PC-9 (cell line): ENCODE measurements at regions of chr6 and their contacts with region 1.

Region 1: DNA sequence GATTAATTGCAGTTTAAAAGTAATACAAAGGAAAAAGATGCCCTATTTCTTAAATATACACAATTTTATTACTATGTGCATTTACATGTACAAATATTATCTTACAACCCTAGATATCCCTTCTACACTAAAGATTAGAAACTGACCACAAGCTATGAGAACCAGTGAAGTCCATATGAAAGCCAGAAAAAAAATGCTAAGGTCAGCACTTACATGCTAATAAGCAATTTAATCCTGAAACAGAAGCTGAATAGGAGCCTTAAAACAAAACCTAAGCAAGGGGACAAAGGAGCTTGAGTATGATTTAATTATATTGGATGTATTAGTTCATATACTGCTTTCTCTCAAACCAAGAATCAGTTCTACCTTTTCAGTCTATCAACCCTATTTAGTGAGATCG is 14.2 kb downstream of the CEP162 start:
- DNase-seq: no peak
- H3K4me3 ChIP-seq: no peak overlapping the region
- H3K27ac ChIP-seq: no peak overlapping the region
- H3K4me1 ChIP-seq: no peaks in the 10 kb centered on the region
- H3K27me3 ChIP-seq: no peaks in the 10 kb centered on the region
- CTCF ChIP-seq: no peak

Region 2: GRCh38 chr6:84197708-84198107 is 15.5 kb before region 1 on chr6:
- CTCF ChIA-PET with region 1: interaction called, 18 read pairs
- POLR2A ChIA-PET with region 1: no interaction called
- intact Hi-C with region 1: no loop called
- DNase-seq: no peak
- H3K4me3 ChIP-seq: no peak overlapping the region
- H3K27ac ChIP-seq: no peak overlapping the region
- H3K4me1 ChIP-seq: peaks cover 17% of the 10 kb centered on the region
- H3K27me3 ChIP-seq: no peaks in the 10 kb centered on the region
- CTCF ChIP-seq: no peak

Region 3: DNA sequence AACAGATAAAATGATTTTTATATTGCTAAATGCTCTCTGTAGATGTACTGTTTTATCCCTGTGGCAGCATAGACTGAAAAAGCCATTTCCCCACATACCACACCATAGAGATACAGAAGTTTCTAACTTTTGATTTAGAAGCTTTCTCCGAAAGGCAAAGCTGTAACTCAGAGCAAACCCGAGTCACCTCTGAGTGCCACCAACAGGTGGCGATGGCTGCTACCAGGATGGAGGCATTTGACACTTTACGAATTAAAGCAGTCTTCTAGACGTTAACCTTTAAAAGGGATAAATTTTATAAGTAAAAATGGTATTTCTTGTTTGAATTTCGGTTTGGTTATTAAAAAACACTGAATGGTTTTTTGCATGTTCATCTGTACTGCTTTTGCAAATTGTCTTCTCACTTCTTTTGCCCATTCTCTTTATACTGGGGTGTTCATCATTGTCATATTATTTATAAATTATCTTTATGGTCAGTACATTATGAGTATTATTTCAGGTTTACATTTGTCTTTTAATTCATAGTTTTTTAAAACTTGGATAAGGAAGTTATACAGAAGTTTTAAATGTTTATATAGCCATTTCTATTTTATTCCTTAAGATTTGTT is 215.2 kb after region 1 on chr6:
- CTCF ChIA-PET with region 1: no interaction called
- POLR2A ChIA-PET with region 1: no interaction called
- intact Hi-C with region 1: no loop called
- DNase-seq: peak in 1 of 2 experiments; percentile 33
- H3K4me3 ChIP-seq: no peak overlapping the region
- H3K27ac ChIP-seq: no peak overlapping the region
- H3K4me1 ChIP-seq: no peaks in the 10 kb centered on the region
- H3K27me3 ChIP-seq: no peaks in the 10 kb centered on the region
- CTCF ChIP-seq: peak; percentile 76